Activated CD4-positive, alpha-beta memory T cell treated with anti-CD3 and anti-CD28 coated beads for 36 hours (primary cell): ENCODE measurements at regions of chr5 and their contacts with region 1.

Region 1: DNA sequence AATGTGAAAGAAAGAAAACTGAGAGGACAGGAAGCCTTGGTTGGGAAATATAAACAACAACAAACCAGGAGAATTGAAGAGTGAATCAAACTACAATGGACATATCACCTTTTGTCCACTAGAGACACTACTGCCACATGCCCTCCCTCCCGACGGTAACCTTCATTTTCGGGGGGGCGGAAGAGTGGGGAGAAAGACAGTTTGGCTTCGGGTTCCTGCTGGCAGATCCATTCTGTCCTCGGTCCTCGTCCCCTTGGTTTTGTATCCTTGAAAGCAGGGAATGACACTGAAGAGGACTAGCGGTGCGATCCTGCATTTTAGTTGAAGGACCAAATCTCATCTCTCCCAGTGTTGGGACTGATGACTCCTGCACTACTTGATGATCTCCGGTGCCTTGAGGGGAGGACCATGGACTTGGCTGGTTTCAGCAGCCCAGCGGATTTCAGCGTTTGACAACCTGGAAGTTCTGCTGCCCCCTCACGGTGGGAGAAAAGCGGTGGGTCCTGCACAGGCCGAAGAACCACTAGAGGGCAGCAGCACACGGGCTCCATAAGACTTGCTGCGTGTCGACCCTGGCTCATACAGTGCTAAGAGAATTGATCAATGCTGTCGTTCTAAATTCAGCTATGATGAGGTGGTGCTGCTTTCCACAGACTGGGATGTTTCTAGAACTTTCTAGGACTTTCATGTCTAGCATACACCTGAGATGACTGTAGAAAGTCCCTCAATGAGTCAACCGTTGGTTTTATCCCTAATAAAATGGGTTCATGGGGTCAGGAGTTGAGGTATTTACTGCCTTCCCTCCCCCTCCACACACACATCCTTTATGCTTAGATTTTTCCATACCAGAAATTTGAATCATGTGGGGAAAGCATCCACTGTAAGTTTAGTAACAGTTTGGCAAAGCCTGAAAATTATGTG is 15.1 kb upstream of the ZNF131 start:
- DNase-seq: peak; percentile 92
- H3K4me3 Mint-ChIP-seq: peak overlapping the region; percentile 75
- H3K27ac Mint-ChIP-seq: peak overlapping the region; percentile 79
- H3K4me1 Mint-ChIP-seq: peaks cover 49% of the 10 kb centered on the region
- H3K27me3 Mint-ChIP-seq: no peaks in the 10 kb centered on the region

Region 2: DNA sequence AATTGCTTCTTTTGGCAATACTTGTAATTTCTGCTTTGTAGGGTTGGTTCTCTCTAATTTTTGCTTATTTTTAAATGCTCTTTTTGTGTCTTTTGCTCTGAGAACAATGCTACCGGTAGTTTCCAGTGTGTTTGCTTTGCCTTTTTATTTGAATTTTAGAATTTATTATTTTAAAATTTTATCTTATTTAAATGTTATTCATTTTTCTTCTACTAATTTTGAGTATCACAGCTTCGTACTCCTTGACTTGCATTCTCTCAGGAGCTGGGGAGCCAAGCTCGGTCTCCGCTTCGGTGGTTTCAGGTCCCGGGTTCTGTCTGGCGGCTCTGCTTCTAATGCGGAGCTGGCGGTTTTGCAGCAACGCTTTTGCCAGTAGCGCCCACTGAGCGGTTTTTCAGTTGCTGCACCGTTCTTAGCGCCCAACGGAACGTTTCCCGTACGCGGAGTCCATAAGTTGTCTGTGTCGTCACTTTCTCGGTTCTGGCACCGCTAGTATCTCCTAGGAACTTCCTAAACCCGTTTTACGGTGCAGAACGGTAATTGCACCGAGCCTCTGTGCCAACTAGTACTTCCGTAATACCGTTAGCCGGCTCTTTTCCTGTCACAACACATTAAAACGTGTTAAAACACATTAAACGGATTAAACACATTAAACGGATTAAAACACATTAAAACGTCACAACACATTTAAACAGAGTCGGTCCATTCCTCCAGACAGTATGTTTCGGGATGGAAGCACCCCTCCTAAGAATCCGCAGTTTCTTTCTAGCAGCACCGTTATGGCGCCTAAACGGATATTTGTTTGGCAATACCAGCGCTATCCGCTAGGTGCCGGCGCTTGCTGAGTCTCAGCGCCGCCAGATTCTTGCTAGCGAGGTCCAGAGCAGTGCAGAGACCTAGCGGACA is 111.1 kb before region 1 on chr5:
- CTCF ChIA-PET with region 1: interaction called, 3 read pairs
- POLR2A ChIA-PET with region 1: no interaction called
- intact Hi-C with region 1: loop called (anchors 1 kb)
- DNase-seq: peak; percentile 93
- H3K4me3 Mint-ChIP-seq: peak overlapping the region; percentile 87
- H3K27ac Mint-ChIP-seq: peak overlapping the region; percentile 94
- H3K4me1 Mint-ChIP-seq: peaks cover 25% of the 10 kb centered on the region
- H3K27me3 Mint-ChIP-seq: no peaks in the 10 kb centered on the region

Region 3: DNA sequence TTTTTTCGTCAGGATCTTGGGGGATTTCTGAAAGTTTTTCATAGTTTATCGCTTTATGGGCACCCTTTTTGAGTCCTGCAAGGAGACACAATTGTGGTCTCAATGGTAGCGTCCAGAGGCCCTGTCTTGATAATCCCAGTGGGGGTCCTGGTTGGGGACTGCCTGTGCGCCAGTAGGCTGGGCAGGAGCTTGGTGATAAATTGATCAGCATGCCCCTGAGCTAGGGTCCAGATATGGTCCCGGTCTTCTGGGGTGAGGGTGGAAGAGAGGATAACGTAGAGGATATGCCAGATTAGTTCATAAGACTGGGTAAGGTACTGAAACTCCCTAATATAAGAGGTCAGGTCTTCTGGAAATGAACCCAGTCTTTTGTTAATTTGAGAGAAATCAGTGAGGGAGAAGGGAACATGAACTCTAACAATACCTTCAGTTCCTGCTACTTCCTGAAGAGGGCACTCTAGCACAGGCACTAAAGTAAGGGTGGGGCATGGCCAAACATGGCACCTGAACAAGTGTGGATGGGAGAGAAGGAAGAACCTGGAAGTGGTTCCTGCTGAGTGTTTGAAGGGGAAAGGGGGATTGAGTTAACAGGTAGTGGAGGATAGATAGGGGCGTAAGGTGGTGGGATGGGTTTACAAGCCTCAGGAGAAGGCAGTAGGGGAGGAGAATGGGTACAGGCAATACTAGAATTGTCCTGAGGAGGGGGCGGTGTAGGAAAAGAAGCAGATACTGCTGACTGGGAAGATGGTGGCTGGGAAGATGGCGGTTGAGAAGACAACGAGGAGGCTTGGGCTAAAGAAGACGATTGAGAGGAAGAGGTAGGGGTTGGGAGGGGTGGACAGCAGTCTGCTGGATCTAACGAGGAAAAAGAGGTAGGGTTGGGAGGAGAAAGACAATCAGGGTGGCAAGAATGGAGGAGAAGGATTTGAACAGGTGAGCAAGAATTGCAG is 31.8 kb before region 1 on chr5:
- CTCF ChIA-PET with region 1: interaction called, 7 read pairs
- POLR2A ChIA-PET with region 1: no interaction called
- intact Hi-C with region 1: loop called (anchors 2 kb)
- DNase-seq: peak; percentile 58
- H3K4me3 Mint-ChIP-seq: no peak overlapping the region
- H3K27ac Mint-ChIP-seq: no peak overlapping the region
- H3K4me1 Mint-ChIP-seq: peaks cover 39% of the 10 kb centered on the region
- H3K27me3 Mint-ChIP-seq: no peaks in the 10 kb centered on the region

Region 4: GRCh38 chr5:43191740-43192557 is 86.3 kb after region 1 on chr5 and contains the start of gene NIM1K:
- CTCF ChIA-PET with region 1: interaction called, 7 read pairs
- POLR2A ChIA-PET with region 1: no interaction called
- intact Hi-C with region 1: loop called (anchors 1 kb)
- DNase-seq: peak; percentile 62
- H3K4me3 Mint-ChIP-seq: peak within 1 kb of the TSS; percentile 78
- H3K27ac Mint-ChIP-seq: no peak within 1 kb of the TSS
- H3K4me1 Mint-ChIP-seq: peaks cover 31% of the 10 kb centered on the region
- H3K27me3 Mint-ChIP-seq: peaks cover 16% of the 10 kb centered on the region
- total RNA-seq, gene NIM1K: 0.75 to 1.00 TPM

Region 5: DNA sequence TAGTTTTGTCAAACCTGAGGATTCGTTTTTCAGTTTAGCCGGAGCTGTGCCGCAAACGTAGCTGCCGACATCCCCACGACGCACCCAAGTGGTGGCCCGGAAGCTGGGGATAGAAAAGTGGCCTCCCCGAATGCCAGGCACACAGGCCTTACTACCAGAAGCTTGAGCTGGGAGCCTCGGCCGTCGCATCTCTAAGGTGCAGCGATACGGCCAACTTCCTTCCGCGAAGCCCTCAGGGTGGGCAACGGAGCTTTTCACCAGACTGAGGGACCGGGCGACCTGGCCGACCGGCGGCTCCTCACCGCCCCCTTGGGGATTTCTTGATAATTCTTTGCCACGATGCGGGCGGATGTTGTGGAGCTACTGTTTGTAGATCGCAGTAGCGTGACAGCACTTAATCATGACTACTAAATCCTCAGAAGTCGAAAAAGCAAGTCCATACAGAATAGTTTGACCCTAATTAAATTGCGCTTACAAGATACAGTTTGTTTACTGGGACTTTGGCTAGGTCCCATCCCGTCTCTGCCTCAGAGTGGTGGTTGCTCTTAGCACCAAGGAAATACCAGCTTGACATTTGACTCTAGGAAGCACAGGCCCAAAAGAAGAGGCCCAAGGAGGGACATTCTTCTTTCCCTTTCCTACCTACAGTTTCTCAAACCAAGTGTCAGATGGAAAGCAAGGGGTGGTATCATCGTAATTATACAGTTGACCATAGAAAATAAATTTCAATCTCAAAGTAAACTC is 378.6 kb after region 1 on chr5:
- CTCF ChIA-PET with region 1: interaction called, 10 read pairs
- POLR2A ChIA-PET with region 1: no interaction called
- intact Hi-C with region 1: loop called (anchors 5 kb)
- DNase-seq: peak; percentile 93
- H3K4me3 Mint-ChIP-seq: peak overlapping the region; percentile 98
- H3K27ac Mint-ChIP-seq: peak overlapping the region; percentile 100
- H3K4me1 Mint-ChIP-seq: peaks cover 49% of the 10 kb centered on the region
- H3K27me3 Mint-ChIP-seq: no peaks in the 10 kb centered on the region